OCI-LY7 (cell line): ENCODE measurements at regions of chr11 and their contacts with region 1.

Region 1: GRCh38 chr11:18321980-18322711 is at the starts of genes GTF2H1 and HPS5:
- DNase-seq: peak; percentile 99
- H3K4me3 ChIP-seq: peak within 1 kb of the TSS; percentile 87
- H3K27ac ChIP-seq: peak within 1 kb of the TSS; percentile 79
- H3K4me1 ChIP-seq: peaks cover 40% of the 10 kb centered on the region
- CTCF ChIP-seq: no peak
- total RNA-seq, gene GTF2H1: 48.0 and 53.1 TPM in 2 replicates
- total RNA-seq, gene HPS5: 23.0 and 31.1 TPM in 2 replicates

Region 2: GRCh38 chr11:17839973-17840611 is 482.1 kb before region 1 on chr11:
- CTCF ChIA-PET with region 1: no interaction called
- POLR2A ChIA-PET with region 1: no interaction called
- intact Hi-C with region 1: no loop called
- DNase-seq: no peak
- H3K4me3 ChIP-seq: no peak overlapping the region
- H3K27ac ChIP-seq: no peak overlapping the region
- H3K4me1 ChIP-seq: no peaks in the 10 kb centered on the region
- CTCF ChIP-seq: no peak

Region 3: GRCh38 chr11:18229501-18229900 is 92.6 kb before region 1 on chr11:
- CTCF ChIA-PET with region 1: no interaction called
- POLR2A ChIA-PET with region 1: interaction called, 15 read pairs
- intact Hi-C with region 1: loop called (anchors 1 kb)
- DNase-seq: peak; percentile 96
- H3K4me3 ChIP-seq: peak overlapping the region; percentile 63
- H3K27ac ChIP-seq: peak overlapping the region; percentile 100
- H3K4me1 ChIP-seq: peaks cover 77% of the 10 kb centered on the region
- CTCF ChIP-seq: no peak

Region 4: DNA sequence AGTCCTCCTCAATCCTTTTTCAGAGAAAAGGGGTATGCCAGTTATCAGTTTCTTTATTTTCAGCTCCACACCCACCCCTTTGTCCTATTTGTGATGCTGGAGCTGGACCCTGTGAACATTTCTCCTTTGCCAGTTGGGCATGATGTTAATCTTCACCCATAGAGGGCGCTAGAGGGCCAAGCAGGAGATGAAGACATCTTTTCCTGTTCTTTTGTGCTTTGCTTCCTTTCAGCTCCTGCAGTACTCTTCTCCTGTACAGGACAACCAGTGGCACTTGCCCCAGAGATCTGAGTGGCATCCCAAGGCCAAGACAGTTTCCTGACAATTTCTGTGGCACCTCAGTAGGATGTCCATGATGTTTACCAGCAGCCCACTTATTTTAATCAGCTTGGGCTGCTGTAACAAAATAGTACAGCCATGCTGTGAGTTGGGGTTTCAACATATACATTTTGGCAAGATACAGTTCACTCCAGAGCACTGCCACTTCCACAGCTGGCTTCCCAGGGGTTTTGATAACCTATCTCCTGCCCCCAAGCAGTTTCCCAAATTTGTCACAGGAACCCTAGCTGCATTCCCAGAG is 78.3 kb before region 1 on chr11:
- CTCF ChIA-PET with region 1: no interaction called
- POLR2A ChIA-PET with region 1: no interaction called
- intact Hi-C with region 1: loop called (anchors 5 kb)
- DNase-seq: peak; percentile 81
- H3K4me3 ChIP-seq: no peak overlapping the region
- H3K27ac ChIP-seq: no peak overlapping the region
- H3K4me1 ChIP-seq: peaks cover 21% of the 10 kb centered on the region
- CTCF ChIP-seq: peak; percentile 95

Region 5: DNA sequence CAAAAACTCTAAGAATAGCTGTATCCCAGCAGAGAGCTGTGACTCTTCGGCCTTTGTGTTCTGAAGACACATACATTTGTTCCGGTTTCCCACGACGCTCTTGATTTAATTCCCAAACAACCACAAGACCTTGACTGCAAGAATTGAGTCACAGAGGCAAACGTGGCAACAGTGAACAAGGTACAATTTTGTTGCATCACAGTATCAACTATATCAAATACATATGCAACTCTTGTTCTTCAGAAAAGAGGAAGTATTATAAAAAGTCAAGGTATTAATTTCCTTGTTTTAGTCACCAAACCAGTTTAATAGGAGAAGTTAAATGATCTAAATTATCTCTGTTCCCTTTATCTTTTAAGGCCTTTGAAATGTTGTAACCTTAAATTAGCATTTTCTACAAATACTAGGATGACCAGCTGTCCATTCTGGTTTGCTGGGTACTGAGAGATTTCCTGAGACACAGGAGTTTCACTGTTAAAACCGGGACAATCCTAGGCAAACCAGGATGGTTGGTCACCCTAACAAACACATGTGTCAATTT is 11.3 kb before region 1 on chr11:
- CTCF ChIA-PET with region 1: no interaction called
- POLR2A ChIA-PET with region 1: interaction called, 16 read pairs
- intact Hi-C with region 1: no loop called
- DNase-seq: no peak
- H3K4me3 ChIP-seq: no peak overlapping the region
- H3K27ac ChIP-seq: peak overlapping the region; percentile 38
- H3K4me1 ChIP-seq: peaks cover 14% of the 10 kb centered on the region
- CTCF ChIP-seq: no peak

Region 6: GRCh38 chr11:18634140-18635032 is 312.2 kb after region 1 on chr11 and contains the start of gene SPTY2D1:
- CTCF ChIA-PET with region 1: no interaction called
- POLR2A ChIA-PET with region 1: interaction called, 3 read pairs
- intact Hi-C with region 1: loop called (anchors 1 kb)
- DNase-seq: peak; percentile 100
- H3K4me3 ChIP-seq: peak within 1 kb of the TSS; percentile 90
- H3K27ac ChIP-seq: peak within 1 kb of the TSS; percentile 67
- H3K4me1 ChIP-seq: peaks cover 16% of the 10 kb centered on the region
- CTCF ChIP-seq: no peak
- total RNA-seq, gene SPTY2D1: 15.6 and 15.8 TPM in 2 replicates